Activated CD4-positive, alpha-beta memory T cell treated with anti-CD3 and anti-CD28 coated beads for 36 hours (primary cell): ENCODE measurements at regions of chr17 and their contacts with region 1.

Region 1: GRCh38 chr17:44210342-44211192 is 8.9 kb downstream of the UBTF start:
- DNase-seq: peak; percentile 95
- H3K4me3 Mint-ChIP-seq: peak overlapping the region; percentile 70
- H3K27ac Mint-ChIP-seq: peak overlapping the region; percentile 92
- H3K4me1 Mint-ChIP-seq: peaks cover 64% of the 10 kb centered on the region
- H3K27me3 Mint-ChIP-seq: no peaks in the 10 kb centered on the region

Region 2: DNA sequence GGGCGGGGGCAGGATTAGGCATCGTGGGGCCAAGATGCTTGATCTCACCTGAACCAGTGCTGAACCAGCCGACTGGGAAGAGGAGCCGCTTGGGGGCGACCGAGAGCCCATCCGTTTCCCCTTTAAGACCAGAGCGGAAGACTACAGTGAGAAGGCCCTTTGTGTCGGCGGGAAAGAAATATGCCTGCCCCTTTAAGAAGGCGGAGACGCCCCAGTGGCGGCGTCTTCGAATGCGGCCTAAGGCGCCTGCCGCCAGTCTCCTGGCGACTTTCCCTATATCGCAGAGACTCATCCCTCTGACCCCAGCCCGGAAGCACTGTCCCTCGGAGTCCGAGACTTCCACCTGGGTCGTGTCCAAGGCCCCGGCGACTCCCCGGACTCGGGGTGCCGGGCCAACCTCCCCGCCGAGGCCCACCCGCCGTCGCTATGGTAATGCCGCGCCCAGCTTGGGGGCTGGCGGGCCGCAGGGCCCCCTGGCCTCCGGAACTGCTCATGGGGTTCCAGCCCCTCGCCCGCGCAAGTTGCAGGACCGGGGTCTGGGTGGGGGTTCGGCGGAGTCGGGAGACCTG is 68.8 kb before region 1 on chr17 and contains the start of gene HROB:
- CTCF ChIA-PET with region 1: interaction called, 10 read pairs
- POLR2A ChIA-PET with region 1: interaction called, 4 read pairs
- intact Hi-C with region 1: no loop called
- DNase-seq: peak; percentile 99
- H3K4me3 Mint-ChIP-seq: peak within 1 kb of the TSS; percentile 87
- H3K27ac Mint-ChIP-seq: peak within 1 kb of the TSS; percentile 89
- H3K4me1 Mint-ChIP-seq: peaks cover 24% of the 10 kb centered on the region
- H3K27me3 Mint-ChIP-seq: peaks cover 4% of the 10 kb centered on the region
- total RNA-seq, gene HROB: 17.9 to 19.8 TPM

Region 3: DNA sequence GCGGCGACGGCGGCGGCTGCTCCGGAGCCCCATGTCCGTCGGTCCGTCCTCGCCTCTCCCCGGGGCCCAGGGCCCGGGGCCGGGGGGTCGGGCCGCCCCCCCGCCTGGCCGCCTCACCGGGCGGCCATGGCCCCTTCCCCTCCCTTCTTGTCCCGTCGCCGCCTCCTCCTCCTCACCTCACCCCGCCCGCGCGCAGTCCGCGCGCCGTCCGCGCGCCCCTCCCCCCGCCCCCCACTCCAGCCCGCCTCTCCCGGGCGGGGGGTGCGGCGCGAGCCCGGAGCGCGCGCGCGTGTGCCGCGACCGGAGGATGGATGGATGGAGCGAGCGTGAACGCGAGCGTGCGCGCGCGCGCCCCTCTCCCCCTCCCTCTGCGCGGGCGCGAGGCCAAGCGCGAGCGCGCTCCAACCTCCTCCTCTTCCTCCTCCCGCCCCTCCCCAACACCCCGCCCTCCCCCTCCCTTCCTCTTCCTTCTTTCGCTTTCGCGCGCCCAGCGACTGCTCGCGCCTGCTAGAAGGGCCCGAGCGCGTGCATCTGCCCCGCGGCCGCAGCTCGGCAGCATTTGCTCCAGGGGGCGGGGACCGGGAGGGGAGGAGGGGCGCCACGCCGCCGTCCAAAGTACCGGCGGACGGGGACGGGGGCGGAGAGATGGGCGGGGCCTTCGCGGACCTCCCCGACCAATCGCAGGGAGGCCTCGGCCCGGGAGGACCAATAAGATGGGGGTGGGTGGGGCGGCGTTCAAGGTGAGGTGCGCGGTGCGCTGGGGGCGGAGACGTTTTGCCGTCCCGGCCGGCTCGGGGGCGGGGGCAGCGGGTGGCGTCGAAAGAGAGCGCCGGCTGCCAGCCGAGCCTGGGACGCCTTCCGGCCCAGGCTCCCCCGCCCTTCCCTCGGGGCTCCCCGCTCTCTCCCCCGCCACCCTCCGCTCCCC is 10.8 kb before region 1 on chr17 and contains the start of gene ATXN7L3:
- CTCF ChIA-PET with region 1: interaction called, 54 read pairs
- POLR2A ChIA-PET with region 1: interaction called, 7 read pairs
- intact Hi-C with region 1: loop called (anchors 1 kb)
- DNase-seq: peak; percentile 100
- H3K4me3 Mint-ChIP-seq: peak within 1 kb of the TSS; percentile 91
- H3K27ac Mint-ChIP-seq: peak within 1 kb of the TSS; percentile 92
- H3K4me1 Mint-ChIP-seq: peaks cover 41% of the 10 kb centered on the region
- H3K27me3 Mint-ChIP-seq: no peaks in the 10 kb centered on the region
- total RNA-seq, gene ATXN7L3: 63.4 to 69.7 TPM

Region 4: GRCh38 chr17:44324571-44325275 is 114.2 kb after region 1 on chr17 and contains the start of gene SLC25A39:
- CTCF ChIA-PET with region 1: interaction called, 69 read pairs
- POLR2A ChIA-PET with region 1: interaction called, 9 read pairs
- intact Hi-C with region 1: loop called (anchors 1 kb)
- DNase-seq: peak; percentile 96
- H3K4me3 Mint-ChIP-seq: peak within 1 kb of the TSS; percentile 89
- H3K27ac Mint-ChIP-seq: peak within 1 kb of the TSS; percentile 94
- H3K4me1 Mint-ChIP-seq: peaks cover 21% of the 10 kb centered on the region
- H3K27me3 Mint-ChIP-seq: no peaks in the 10 kb centered on the region
- total RNA-seq, gene SLC25A39: 121 to 122 TPM

Region 5: GRCh38 chr17:44344939-44345453 is 134.4 kb after region 1 on chr17 and contains the start of gene GRN:
- CTCF ChIA-PET with region 1: interaction called, 32 read pairs
- POLR2A ChIA-PET with region 1: interaction called, 5 read pairs
- intact Hi-C with region 1: no loop called
- DNase-seq: peak; percentile 93
- H3K4me3 Mint-ChIP-seq: peak within 1 kb of the TSS; percentile 82
- H3K27ac Mint-ChIP-seq: peak within 1 kb of the TSS; percentile 66
- H3K4me1 Mint-ChIP-seq: peaks cover 21% of the 10 kb centered on the region
- H3K27me3 Mint-ChIP-seq: no peaks in the 10 kb centered on the region
- total RNA-seq, gene GRN: 59.7 to 62.4 TPM

Region 6: GRCh38 chr17:44350733-44351226 is 140.2 kb after region 1 on chr17:
- CTCF ChIA-PET with region 1: interaction called, 32 read pairs
- POLR2A ChIA-PET with region 1: interaction called, 5 read pairs
- intact Hi-C with region 1: no loop called
- DNase-seq: peak; percentile 81
- H3K4me3 Mint-ChIP-seq: no peak overlapping the region
- H3K27ac Mint-ChIP-seq: no peak overlapping the region
- H3K4me1 Mint-ChIP-seq: peaks cover 17% of the 10 kb centered on the region
- H3K27me3 Mint-ChIP-seq: no peaks in the 10 kb centered on the region

Region 7: GRCh38 chr17:44438636-44439035 is 228.1 kb after region 1 on chr17:
- CTCF ChIA-PET with region 1: no interaction called
- POLR2A ChIA-PET with region 1: no interaction called
- intact Hi-C with region 1: no loop called
- DNase-seq: peak; percentile 16
- H3K4me3 Mint-ChIP-seq: no peak overlapping the region
- H3K27ac Mint-ChIP-seq: no peak overlapping the region
- H3K4me1 Mint-ChIP-seq: peaks cover 16% of the 10 kb centered on the region
- H3K27me3 Mint-ChIP-seq: no peaks in the 10 kb centered on the region

Region 8: GRCh38 chr17:44610871-44611270 is 400.3 kb after region 1 on chr17:
- CTCF ChIA-PET with region 1: no interaction called
- POLR2A ChIA-PET with region 1: no interaction called
- intact Hi-C with region 1: no loop called
- DNase-seq: no peak
- H3K4me3 Mint-ChIP-seq: no peak overlapping the region
- H3K27ac Mint-ChIP-seq: no peak overlapping the region
- H3K4me1 Mint-ChIP-seq: no peaks in the 10 kb centered on the region
- H3K27me3 Mint-ChIP-seq: peaks cover 14% of the 10 kb centered on the region